Activated naive CD4-positive, alpha-beta T cell treated with anti-CD3 and anti-CD28 coated beads for 36 hours (primary cell): ENCODE measurements at regions of chr12 and their contacts with region 1.

Region 1: DNA sequence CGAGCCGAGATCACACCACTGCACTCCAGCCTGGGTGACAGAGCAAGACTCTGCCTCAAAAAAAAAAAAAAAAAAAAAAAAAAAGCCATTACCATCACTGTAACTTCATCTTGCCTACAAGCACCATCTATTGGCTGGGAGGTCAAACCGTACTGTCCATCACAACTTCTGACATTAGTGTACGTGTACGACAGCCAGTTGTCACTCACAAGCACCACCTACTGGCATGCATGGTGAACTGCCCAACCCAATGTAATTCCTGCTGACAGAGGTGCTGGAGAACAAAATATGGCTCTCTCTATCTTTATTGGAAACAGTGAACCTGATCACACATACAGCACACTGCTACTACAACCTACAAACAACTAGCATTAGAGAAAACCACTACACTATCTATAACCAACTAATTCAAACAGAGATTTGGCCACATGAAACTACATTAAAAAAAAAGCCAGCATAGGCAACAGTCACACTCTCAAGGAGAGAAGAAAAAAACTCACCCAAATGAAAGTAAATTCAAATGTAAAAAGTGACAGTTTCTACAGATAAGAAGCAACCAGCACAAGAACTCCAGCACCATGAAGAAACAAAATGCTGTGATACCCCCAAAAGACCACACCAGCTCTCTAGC is 82.3 kb downstream of the PUS7L start:
- DNase-seq: peak; percentile 33
- H3K4me3 Mint-ChIP-seq: no peak overlapping the region
- H3K27ac Mint-ChIP-seq: no peak overlapping the region
- H3K4me1 Mint-ChIP-seq: no peaks in the 10 kb centered on the region
- H3K27me3 Mint-ChIP-seq: peaks cover 10% of the 10 kb centered on the region

Region 2: GRCh38 chr12:43501703-43502102 is 174.6 kb before region 1 on chr12:
- CTCF ChIA-PET with region 1: interaction called, 3 read pairs
- intact Hi-C with region 1: loop called (anchors 1 kb)
- DNase-seq: no peak
- H3K4me3 Mint-ChIP-seq: no peak overlapping the region
- H3K27ac Mint-ChIP-seq: no peak overlapping the region
- H3K4me1 Mint-ChIP-seq: no peaks in the 10 kb centered on the region
- H3K27me3 Mint-ChIP-seq: peaks cover 2% of the 10 kb centered on the region

Region 3: DNA sequence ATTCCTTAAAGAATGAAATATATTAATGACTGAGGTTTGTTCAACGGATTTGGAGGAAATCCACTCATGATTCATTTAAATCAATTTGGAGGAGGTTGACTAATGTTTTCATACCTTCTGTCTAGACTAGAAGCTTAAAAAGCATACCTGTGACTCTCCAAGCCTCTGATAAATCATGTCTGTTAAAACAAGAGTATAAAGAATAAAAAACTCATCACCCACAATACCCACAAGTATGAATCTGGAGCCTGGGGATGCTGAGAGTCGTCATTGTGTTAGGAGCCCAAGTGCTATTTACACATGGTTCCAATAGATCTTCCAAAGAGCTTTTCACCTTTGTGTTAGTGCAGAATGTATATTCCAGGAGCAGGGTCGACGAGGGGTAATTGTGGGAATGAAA is 37.5 kb before region 1 on chr12:
- CTCF ChIA-PET with region 1: no interaction called
- intact Hi-C with region 1: no loop called
- DNase-seq: no peak
- H3K4me3 Mint-ChIP-seq: no peak overlapping the region
- H3K27ac Mint-ChIP-seq: no peak overlapping the region
- H3K4me1 Mint-ChIP-seq: no peaks in the 10 kb centered on the region
- H3K27me3 Mint-ChIP-seq: peaks cover 35% of the 10 kb centered on the region